Right ventricle myocardium inferior (tissue), 1 donor: ENCODE measurements at regions of chr3 and their contacts with region 1.

Region 1: GRCh38 chr3:69691860-69692259 is 47.4 kb upstream of the MITF start:
- DNase-seq: no peak
- ATAC-seq: no peak

Region 2: DNA sequence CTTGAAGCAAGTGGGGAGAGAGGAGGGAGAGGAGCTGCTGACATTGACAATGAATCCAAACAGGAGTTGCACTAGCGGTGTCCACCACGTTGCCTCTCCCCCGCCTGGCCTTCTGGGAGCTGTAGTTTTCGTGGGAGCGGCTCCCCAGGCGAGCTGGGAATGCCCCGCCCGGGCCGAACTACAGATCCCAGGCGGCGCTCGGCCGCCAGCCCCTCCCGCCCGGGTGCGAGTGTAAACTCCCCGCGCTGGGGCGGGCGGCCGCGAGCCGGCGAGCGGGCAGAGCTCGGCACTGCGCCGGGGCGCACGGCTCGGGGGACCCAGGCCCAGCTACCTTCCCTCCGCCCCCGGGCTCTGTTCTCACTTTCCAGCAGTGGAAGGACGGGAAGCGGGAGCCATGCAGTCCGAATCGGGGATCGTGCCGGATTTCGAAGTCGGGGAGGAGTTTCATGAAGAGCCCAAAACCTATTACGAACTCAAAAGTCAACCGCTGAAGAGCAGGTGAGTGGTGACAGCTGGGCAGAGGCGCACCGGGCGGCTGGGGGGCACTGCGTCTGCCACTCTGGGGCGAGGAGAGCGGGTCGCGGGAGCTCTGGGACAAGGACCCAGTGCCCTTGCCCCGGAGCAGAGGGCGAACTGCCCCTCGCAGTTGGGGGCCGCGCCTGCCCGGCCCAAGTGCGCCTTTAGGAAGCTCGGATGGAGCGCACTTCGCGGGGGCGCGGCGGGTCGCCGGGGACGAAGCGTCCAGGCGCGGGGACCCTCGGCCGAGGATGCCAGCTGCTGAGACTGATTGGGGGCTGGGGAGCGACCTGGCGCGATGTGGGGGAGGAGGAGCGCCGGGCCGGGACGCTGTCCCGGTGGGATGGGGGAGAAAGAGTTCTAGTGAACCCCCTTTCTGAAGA is 47.6 kb after region 1 on chr3 and contains the start of gene MITF:
- intact Hi-C with region 1: loop called (anchors 5 kb)
- DNase-seq: peak; percentile 96
- ATAC-seq: peak; percentile 97
- total RNA-seq, gene MITF: 71.0 TPM

Region 3: GRCh38 chr3:69791919-69792399 is 100.1 kb after region 1 on chr3:
- intact Hi-C with region 1: loop called (anchors 1 kb)
- DNase-seq: no peak
- ATAC-seq: peak; percentile 56

Region 4: DNA sequence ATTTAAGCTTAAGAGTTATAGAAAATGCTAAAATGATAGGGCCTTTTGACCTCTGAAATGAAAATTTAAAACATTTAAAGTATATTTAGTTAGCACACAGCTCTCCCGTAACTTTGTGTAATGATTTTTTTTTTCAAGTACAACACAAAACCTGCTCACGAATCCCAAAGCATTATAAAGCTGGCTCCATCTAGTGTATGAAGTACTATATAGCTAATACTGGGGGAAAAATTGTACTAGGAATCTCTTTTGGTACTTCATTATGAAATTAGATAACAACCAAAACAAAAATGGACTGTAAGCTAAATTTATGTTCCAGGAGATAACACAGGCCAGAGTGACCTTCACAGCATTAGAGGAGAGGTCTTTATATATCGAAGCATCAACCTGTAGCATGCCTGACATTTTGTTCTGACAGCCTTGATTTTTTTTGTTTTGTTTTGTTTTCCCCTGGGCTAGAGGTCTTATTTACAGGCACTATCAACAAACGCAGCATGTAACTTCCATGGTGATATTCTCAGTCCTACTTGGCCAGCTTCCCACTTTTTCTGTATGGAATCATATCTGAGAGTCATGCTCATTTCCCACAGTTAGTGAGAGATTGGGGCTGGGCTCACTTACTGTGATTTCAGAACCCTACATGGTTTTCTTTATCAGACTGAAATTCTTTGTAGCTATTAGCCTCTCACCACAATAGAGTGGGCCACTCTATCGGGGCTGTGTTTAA is 163.7 kb after region 1 on chr3:
- intact Hi-C with region 1: loop called (anchors 2 kb)
- DNase-seq: no peak
- ATAC-seq: peak; percentile 65

Region 5: GRCh38 chr3:69948246-69948862 is 256.5 kb after region 1 on chr3:
- intact Hi-C with region 1: loop called (anchors 5 kb)
- DNase-seq: no peak
- ATAC-seq: no peak